H1 (cell line): ENCODE measurements at regions of chr17 and their contacts with region 1.

Region 1: DNA sequence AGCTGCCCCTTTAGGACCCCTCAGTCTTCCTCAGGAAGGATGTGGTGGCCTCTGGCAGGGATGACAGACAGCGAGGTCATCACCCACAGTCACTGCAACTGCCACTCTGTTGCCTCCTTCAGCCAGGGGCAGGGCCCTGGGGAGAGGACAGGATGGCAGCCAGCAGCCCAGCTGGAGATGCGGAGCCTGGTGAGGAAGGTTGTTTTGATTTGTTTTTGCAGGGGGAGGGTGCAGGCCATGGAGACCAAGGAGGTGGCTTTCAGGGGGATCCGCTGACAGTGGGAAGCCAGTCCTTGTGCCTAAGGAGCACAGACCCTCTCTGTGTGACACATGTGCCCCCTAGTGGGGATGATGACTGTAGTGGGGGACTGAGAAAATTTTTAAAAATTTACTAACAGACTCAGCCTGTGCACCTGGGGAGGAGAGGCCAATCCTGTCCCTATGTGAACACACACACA is 7.4 kb downstream of the PRCD start:
- DNase-seq: no peak
- H3K4me3 ChIP-seq: no peak overlapping the region
- H3K27ac ChIP-seq: no peak overlapping the region
- H3K4me1 ChIP-seq: peaks cover 4 to 30% (median 10%) of the 10 kb centered on the region in 4 experiments; a peak in 6 of 7 replicates
- H3K27me3 ChIP-seq: no peaks in the 10 kb centered on the region; a peak in 1 of 7 replicates
- CTCF ChIP-seq: peak; percentile 63 to 82 (median 65)
- EP300 ChIP-seq: no peak
- POLR2A ChIP-seq: no peak
- RAD21 ChIP-seq: peak; percentile 83 to 89

Region 2: GRCh38 chr17:76506408-76507349 is 40.5 kb before region 1 on chr17:
- CTCF ChIA-PET with region 1: interaction called, 40 read pairs
- POLR2A ChIA-PET with region 1: interaction called, 3 read pairs
- DNase-seq: peak; percentile 56 to 99
- H3K4me3 ChIP-seq: peak overlapping the region in 1 of 4 experiments; percentile 40; a peak in 2 of 8 replicates
- H3K27ac ChIP-seq: no peak overlapping the region
- H3K4me1 ChIP-seq: peaks cover 4 to 9% (median 6%) of the 10 kb centered on the region in 4 experiments
- H3K27me3 ChIP-seq: peaks cover 0 to 6% (median 4%) of the 10 kb centered on the region in 4 experiments; a peak in 5 of 7 replicates
- CTCF ChIP-seq: peak; percentile 92 to 98 (median 93)
- EP300 ChIP-seq: no peak
- POLR2A ChIP-seq: no peak
- RAD21 ChIP-seq: peak; percentile 96 to 97

Region 3: DNA sequence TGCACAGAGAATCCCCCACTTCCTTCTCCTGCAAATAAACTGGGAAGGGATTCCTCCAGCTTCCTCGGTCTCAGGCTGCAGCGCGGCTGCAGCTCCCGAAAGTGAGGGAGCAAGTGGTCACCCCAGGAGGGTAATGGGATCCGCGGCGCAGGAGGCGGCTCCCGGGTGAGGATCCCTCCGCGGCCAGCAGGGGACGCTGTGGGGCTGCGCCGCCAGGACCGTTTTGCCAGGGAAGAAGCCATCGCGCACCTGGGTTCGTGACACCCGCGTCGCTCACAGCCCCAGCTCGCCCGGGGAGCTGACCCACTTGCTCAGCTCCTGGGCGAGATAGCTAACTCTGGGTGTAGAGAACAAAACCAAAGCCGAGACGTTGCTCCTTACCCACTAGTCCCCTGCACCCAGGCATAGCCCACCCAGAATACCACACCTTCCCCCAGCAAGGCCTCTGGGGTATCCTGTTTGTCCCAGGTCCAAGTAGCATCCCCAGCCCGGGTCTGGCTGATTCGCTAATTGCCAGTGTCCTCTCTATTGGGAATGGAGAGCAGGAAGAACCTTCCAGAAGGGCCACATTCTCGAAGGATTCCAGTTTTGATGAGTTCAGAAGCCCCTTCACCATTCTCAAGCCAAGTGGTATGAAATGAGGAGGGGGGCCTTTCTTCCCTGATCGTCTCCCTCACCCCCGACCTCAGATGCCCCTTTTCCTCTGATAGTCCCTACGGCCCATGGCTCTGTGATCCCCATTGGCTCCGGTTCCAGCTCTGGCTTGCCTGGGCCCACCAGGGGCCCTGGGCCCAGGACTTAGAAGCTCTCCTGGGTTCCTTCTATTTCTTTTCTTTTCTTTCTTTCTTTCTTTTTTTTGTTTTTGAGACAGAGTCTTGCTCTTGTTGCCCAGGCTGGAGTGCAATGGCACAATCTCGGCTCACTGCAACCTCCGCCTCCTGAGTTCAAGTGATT is 23.9 kb before region 1 on chr17:
- CTCF ChIA-PET with region 1: interaction called, 260 read pairs
- POLR2A ChIA-PET with region 1: interaction called, 5 read pairs
- DNase-seq: peak; percentile 49 to 96
- H3K4me3 ChIP-seq: no peak overlapping the region
- H3K27ac ChIP-seq: no peak overlapping the region
- H3K4me1 ChIP-seq: peaks cover 0 to 19% (median 10%) of the 10 kb centered on the region in 4 experiments; a peak in 6 of 7 replicates
- H3K27me3 ChIP-seq: peaks cover 0 to 5% (median 0%) of the 10 kb centered on the region in 4 experiments; a peak in 3 of 7 replicates
- CTCF ChIP-seq: peak; percentile 97 to 99 (median 99)
- EP300 ChIP-seq: peak in 1 of 2 experiments; percentile 43; a peak in 1 of 3 replicates
- POLR2A ChIP-seq: no peak
- RAD21 ChIP-seq: peak; percentile 91 to 92

Region 4: GRCh38 chr17:76567634-76568432 is 20.6 kb after region 1 on chr17:
- CTCF ChIA-PET with region 1: interaction called, 7 read pairs
- POLR2A ChIA-PET with region 1: interaction called, 12 read pairs
- DNase-seq: no peak
- H3K4me3 ChIP-seq: no peak overlapping the region
- H3K27ac ChIP-seq: no peak overlapping the region
- H3K4me1 ChIP-seq: peaks cover 0 to 21% (median 5%) of the 10 kb centered on the region in 4 experiments; a peak in 6 of 7 replicates
- H3K27me3 ChIP-seq: no peaks in the 10 kb centered on the region; a peak in 2 of 7 replicates
- CTCF ChIP-seq: no peak
- EP300 ChIP-seq: no peak
- POLR2A ChIP-seq: peak in 1 of 2 experiments; percentile 49; a peak in 1 of 3 replicates
- RAD21 ChIP-seq: no peak

Region 5: DNA sequence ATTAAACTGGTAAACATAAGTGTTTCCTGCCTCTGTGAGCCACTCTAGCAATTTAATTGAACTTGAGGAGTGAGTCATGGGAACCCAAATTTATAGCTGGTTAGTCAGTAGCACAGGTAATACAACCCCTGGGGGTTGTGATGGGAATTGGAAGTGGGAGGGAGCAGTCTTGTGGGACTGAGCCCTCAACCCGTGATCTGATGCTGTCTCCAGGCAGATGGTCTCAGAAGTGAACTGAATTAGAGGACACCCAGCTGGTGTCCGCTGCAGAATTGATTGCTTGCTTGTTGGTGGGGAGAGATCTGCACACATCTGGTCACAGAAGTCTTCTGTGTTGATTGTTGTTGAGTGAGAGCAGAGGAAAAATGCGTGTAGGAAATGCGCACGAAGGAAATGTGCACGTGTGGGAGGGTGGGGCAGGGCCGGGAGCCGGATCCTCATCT is 46.2 kb after region 1 on chr17:
- CTCF ChIA-PET with region 1: no interaction called
- POLR2A ChIA-PET with region 1: no interaction called
- DNase-seq: no peak
- H3K4me3 ChIP-seq: no peak overlapping the region
- H3K27ac ChIP-seq: no peak overlapping the region
- H3K4me1 ChIP-seq: no peaks in the 10 kb centered on the region
- H3K27me3 ChIP-seq: peaks cover 0 to 2% (median 0%) of the 10 kb centered on the region in 4 experiments; a peak in 3 of 7 replicates
- CTCF ChIP-seq: peak in 1 of 3 experiments; percentile 2; a peak in 1 of 4 replicates
- EP300 ChIP-seq: no peak
- POLR2A ChIP-seq: no peak
- RAD21 ChIP-seq: no peak

Region 6: DNA sequence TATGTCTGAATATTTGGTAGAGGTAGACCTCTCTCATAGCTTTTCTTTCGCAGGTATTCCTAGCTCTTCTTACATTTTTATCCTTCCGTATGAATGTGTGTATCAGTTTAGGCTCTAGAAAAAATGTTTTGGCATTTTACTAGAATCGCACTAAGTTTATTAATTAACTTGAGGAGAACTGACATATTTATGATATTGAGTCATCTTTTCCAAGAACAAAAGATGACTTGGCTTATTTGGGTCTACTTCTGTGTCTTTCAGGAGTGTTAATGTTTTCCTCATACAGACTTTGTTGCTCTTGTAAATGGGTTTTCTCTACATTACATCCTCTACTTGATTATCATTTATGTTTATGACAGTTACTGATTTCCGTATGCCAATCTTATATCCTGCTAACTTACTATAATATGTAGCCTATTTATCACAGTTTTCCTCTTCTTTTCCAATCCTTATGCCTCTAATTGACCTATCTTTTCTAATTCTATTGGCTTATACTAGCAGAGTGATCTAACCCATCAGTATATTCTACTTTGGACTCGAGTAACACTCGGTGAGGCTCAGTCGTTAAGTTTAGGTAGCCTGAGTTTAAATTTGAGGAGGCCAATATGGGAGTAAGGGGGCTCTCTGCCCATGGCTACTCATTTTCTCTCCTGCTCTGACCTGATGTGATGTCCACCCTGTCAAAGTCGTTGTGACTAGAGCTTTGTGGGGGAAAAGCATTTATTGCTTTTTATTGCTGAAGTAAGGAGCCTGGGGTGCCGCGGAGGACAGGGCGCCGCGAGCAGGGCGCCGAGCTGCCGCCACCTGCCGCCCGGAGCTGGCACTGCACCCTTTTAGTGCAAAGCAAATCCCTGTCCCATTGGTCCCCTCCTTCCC is 76.3 kb after region 1 on chr17:
- CTCF ChIA-PET with region 1: interaction called, 15 read pairs
- POLR2A ChIA-PET with region 1: interaction called, 4 read pairs
- DNase-seq: peak in 1 of 2 experiments; percentile 93
- H3K4me3 ChIP-seq: no peak overlapping the region
- H3K27ac ChIP-seq: no peak overlapping the region
- H3K4me1 ChIP-seq: no peaks in the 10 kb centered on the region
- H3K27me3 ChIP-seq: no peaks in the 10 kb centered on the region; a peak in 2 of 7 replicates
- CTCF ChIP-seq: peak; percentile 81 to 94 (median 85)
- EP300 ChIP-seq: no peak
- POLR2A ChIP-seq: no peak
- RAD21 ChIP-seq: peak; percentile 83 to 85

Region 7: GRCh38 chr17:76659928-76660614 is 112.9 kb after region 1 on chr17:
- CTCF ChIA-PET with region 1: no interaction called
- POLR2A ChIA-PET with region 1: no interaction called
- DNase-seq: no peak
- H3K4me3 ChIP-seq: no peak overlapping the region
- H3K27ac ChIP-seq: no peak overlapping the region
- H3K4me1 ChIP-seq: no peaks in the 10 kb centered on the region
- H3K27me3 ChIP-seq: no peaks in the 10 kb centered on the region
- CTCF ChIP-seq: no peak
- EP300 ChIP-seq: no peak
- POLR2A ChIP-seq: no peak
- RAD21 ChIP-seq: no peak